ENCODE measurements at regions of chr1 and their contacts with region 1.

Region 1: GRCh38 chr1:18913065-18913835 is 10.9 kb upstream of the ALDH4A1 start:
- DNase-seq: peak; percentile 88

Region 2: GRCh38 chr1:18883636-18884418 is 29.4 kb before region 1 on chr1:
- CTCF ChIA-PET with region 1: interaction called, 12 read pairs
- POLR2A ChIA-PET with region 1: no interaction called
- DNase-seq: peak; percentile 73

Region 3: GRCh38 chr1:18902523-18903290 is 10.5 kb before region 1 on chr1 and contains the start of gene ALDH4A1:
- CTCF ChIA-PET with region 1: interaction called, 13 read pairs
- POLR2A ChIA-PET with region 1: interaction called, 4 read pairs
- DNase-seq: peak; percentile 97

Region 4: DNA sequence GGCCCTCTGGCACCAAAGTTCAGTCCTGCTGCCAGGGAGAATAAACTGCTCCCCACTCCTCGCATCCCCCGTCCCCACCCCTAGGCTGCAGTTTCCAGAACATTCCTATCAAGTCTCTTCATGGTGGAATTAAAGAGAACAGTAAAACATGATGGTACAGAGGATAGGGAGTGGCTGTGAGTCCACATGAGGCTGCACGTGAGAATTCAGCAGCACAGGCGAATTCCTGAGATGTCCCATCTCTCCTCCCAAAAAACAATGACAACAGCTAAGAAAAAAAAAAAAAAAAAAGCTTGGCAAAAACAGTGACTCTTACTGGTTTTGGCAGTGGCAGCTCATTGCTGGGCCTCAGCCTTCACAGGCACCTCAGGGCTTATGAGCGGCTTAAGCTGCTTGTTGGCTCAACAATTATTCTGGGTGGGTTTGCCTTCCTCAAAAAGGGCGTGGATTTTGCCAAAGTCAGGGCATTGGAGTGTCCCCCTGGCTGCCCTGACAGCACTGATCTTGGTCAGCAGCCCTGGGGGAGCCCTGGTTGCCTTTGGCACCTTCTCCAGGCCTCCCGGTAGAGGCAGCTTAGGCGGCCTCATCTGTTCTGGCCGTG is 49.0 kb after region 1 on chr1:
- CTCF ChIA-PET with region 1: interaction called, 10 read pairs
- POLR2A ChIA-PET with region 1: no interaction called
- DNase-seq: no peak

Region 5: DNA sequence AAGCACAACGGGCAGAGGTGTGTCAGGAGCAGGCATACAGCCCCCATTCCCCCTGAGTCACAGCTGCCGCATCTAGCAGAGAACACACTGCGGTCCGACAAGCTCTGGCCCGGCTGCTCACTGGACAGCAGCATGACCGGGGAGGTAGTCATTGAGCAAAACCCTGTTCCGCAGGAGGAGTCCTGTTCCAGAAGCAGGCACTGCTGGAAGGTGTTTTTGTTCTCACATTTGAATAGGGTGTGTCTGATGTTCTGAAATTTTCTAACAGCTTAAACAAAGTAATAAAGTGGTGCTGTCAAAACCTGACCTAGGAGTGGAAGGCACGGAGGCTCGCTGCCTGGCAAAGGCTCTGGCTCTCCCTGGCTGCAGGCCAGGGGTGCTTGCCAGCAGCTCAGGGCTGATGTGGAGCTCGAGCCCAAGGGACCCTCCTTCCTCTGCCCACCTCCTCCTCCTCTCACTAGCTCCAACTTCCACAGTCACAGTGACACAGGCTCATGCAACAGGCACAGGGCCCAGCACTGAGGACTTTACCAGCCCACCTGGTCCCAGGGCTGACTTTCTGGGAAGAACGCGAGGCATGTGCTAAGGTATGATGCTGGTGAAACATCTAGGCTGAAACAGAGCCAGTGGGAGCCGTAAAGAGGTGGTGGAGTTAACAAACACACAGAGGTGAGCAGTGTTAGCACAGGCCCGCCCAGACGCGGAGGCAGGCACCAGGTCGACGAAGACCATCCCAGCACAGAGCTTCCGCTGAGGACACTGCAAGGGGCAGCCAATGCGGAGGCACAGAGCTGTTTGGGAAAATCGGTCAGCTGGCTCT is 161.9 kb after region 1 on chr1:
- CTCF ChIA-PET with region 1: interaction called, 11 read pairs
- POLR2A ChIA-PET with region 1: no interaction called
- DNase-seq: no peak

Region 6: DNA sequence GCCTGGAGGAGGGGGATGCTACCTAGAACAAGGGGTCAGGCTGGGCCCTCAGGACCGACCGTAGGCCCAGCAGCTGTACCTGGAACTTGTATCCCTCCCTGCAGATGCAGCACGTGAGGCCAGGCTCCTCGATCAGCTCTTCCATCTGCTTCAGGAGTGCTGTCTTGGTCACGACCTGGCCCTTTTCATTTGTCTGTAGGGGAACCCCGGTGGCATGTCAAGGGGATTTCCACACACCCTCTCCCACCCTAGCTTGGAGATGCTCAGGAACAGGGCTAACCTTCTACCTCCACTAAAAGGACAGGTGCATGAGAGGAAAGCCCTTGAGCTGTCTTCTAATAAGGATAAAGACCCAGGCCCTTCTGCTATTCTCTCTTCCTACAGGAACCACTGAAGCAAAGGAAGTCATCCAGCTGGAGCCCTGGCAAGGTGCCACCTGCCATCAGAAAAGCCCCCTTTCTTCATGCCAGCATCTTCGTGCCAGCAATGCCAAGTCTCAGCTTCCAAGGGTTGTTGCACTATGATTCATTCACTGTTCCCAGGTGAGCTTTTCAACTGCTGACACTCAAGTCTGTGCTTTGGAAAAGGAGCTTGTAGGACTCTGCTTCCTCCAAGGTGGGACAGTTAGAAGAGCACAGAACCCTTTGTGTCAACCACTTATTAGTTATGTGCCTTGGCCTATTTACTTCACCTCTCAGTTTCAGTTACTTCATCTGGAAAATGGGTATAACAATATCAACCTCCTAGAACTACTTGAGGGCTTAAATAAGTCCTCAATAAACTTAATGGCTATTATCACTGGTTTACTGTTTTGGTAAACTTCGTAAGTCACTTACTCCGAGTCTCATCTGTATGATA is 174.7 kb after region 1 on chr1:
- CTCF ChIA-PET with region 1: interaction called, 10 read pairs
- POLR2A ChIA-PET with region 1: no interaction called
- DNase-seq: no peak

Measured in HEK293T (cell line).